Activated T-helper 1 cell treated with anti-CD3 and anti-CD28 coated beads, Interleukin-12 subunit alpha, Interleukin-12 subunit beta, Interleukin-2, Interleukin-4 antibody, amounts not matched to agents 30 ng/mL and 10 ng/mL and 1 ng/mL, durations not matched to agents 14 hours and 24 hours and 36 hours (primary cell): ENCODE measurements at regions of chr12 and their contacts with region 1.

Region 1: DNA sequence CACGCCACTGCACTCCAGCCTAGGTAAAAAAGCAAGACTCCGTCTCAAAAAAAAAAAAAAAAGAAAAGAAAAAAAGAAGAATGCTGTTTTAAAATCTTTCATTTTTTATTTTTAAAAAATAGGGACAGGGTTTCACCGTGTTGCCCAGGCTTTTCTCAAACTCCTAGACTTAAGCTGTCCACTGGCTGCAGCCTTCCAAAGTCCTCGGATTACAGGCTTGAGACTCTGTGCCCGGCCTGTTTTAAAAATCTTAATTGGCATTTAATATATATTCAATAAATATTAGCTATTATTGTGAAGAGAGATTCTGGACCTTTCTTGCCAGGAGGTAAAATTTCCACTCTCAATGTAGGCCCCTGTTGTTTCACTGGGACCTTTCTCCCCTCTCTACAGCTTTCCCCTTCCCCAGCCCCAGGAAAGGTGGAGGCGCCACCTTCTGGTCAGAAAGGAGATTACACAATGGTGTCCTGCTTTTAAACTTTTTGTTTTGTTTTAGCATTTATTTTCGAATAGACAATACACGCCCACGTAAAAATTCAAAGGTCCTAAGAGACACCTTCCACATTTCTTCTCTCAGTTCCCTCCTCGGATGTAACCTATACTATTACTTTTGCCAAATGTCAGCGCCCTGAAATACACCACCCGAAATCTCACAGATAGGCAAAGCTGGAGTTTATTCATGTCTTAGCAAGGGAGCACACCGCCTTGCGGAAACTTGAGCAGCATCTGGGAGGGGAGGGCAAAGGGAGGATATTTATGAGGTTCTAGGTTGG is 23.8 kb upstream of the PHC1 start:
- DNase-seq: peak; percentile 45
- H3K4me3 Mint-ChIP-seq: peak overlapping the region; percentile 72
- H3K27ac Mint-ChIP-seq: no peak overlapping the region
- H3K4me1 Mint-ChIP-seq: peaks cover 6% of the 10 kb centered on the region
- H3K27me3 Mint-ChIP-seq: peaks cover 13% of the 10 kb centered on the region

Region 2: GRCh38 chr12:8662593-8662992 is 227.9 kb before region 1 on chr12 and contains the start of gene MFAP5:
- intact Hi-C with region 1: loop called (anchors 1 kb)
- DNase-seq: no peak
- H3K4me3 Mint-ChIP-seq: no peak within 1 kb of the TSS
- H3K27ac Mint-ChIP-seq: no peak within 1 kb of the TSS
- H3K4me1 Mint-ChIP-seq: no peaks in the 10 kb centered on the region
- H3K27me3 Mint-ChIP-seq: peaks cover 21% of the 10 kb centered on the region
- total RNA-seq, gene MFAP5: not detected in 2 replicates

Region 3: DNA sequence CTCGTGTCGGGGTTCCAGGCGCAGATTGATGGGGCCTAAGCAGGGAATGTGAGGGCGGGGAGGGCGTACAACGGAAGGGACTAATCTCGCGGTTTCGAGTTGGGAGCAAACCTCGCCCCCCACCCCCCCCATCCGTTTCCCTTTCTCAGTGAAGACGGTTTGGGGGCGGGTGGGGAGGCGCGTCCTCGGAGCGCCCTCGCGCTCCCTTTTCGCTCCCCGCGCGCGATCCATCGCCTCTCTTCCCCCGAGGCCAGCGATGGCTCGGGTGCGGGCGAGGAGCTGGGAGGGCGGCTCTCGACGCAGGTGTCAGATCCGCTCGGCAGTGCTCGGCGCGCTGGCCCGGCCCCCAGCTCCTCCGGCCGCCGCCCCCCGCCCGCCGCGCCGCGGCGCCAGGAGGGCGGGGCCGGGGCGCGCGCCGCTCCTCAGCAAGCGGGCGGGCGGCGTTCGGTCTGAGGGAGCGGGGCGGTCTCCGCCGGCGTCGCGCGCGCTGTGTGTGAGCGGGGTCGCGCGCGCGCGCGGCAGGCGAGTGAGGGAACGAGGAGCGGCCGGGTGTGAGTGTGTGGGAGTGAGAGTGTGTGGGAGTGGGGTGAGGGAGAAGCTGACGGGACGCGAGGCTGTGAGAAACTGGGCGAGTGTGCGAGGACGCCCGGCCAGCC is 192.9 kb before region 1 on chr12 and contains the start of gene RIMKLB:
- intact Hi-C with region 1: loop called (anchors 2 kb)
- DNase-seq: peak; percentile 38
- H3K4me3 Mint-ChIP-seq: peak within 1 kb of the TSS; percentile 86
- H3K27ac Mint-ChIP-seq: peak within 1 kb of the TSS; percentile 65
- H3K4me1 Mint-ChIP-seq: peaks cover 12% of the 10 kb centered on the region
- H3K27me3 Mint-ChIP-seq: peaks cover 63% of the 10 kb centered on the region
- total RNA-seq, gene RIMKLB: 0.47 and 0.52 TPM in 2 replicates

Region 4: DNA sequence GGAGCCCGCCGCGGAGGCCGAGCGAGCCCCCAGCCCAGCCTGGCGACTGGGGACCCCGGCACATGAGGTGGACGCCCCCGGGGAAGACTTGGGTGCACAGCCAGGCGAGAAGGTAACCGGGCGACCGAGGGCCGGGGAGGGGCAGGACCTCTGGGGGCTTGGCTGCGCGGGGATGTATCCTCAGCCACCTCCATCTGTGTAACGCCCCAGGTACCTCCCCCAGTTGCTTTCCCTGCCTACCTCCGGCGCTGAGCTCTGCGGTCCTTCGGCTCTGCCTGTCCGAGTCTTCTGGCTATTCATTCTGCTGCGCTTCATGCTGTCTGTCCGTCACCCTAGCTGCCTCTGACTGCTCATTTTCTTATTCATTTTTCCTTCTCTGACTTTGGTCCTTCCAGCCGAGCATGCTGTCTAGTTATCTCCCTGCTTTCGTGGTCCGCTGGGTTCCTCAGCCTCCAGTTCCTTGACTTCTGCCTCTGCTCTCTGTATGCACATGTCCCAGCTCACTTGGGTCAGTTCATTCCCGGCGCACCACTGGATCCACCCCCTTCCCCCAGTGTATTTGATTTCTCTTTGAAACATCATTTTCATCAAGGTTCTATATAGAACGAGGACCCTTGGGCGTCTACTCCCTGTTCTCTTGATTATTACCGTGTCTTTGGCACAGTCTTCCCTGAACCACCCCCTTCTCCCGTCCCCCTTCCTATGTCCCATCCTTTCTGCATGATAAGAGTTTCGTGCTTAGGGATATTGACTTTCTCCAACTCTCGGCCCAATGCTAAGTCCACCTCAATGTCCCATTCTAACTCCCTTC is 24.4 kb after region 1 on chr12:
- intact Hi-C with region 1: loop called (anchors 1 kb)
- DNase-seq: peak; percentile 56
- H3K4me3 Mint-ChIP-seq: no peak overlapping the region
- H3K27ac Mint-ChIP-seq: no peak overlapping the region
- H3K4me1 Mint-ChIP-seq: peaks cover 8% of the 10 kb centered on the region
- H3K27me3 Mint-ChIP-seq: peaks cover 21% of the 10 kb centered on the region

Region 5: DNA sequence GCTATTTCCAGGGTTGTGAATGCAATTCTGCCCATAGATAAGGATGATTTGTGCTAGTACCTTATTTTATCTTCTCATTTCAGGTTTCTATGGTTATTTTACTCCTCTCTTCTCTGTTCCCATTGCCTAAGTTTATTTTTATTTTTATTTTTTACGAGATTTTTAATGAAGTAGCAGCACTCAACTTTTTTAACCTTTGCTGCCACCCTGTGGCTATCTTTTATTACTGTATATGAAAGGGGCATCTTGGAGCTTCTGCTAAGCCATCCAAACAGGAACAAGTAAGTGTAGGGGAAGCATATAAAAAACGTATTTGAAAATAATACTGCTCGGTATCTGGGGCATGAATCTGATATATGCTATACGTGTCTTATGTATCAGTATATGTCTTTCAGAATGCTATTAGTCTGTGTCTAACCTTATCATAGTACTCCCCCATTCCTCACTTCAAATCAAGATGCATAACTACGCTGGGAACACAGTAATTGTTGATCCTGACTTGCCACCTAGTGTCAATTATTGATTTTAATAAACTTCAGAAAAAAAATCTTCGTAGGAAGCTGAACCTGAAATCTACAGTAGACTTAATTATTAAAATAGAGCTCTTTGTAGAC is 159.1 kb after region 1 on chr12:
- intact Hi-C with region 1: loop called (anchors 1 kb)
- DNase-seq: no peak
- H3K4me3 Mint-ChIP-seq: no peak overlapping the region
- H3K27ac Mint-ChIP-seq: no peak overlapping the region
- H3K4me1 Mint-ChIP-seq: no peaks in the 10 kb centered on the region
- H3K27me3 Mint-ChIP-seq: peaks cover 18% of the 10 kb centered on the region